ENCODE measurements at regions of chr6 and their contacts with region 1.

Region 1: GRCh38 chr6:152124429-152125074 is 317.1 kb downstream of the ESR1 start:
- DNase-seq: peak in 2 of 9 experiments; percentile 27 to 47
- ATAC-seq: no peak
- H3K4me3 ChIP-seq: no peak overlapping the region
- H3K4me3 Mint-ChIP-seq: no peak overlapping the region
- H3K27ac ChIP-seq: no peak overlapping the region
- H3K27ac Mint-ChIP-seq: peak overlapping the region; percentile 37
- H3K4me1 ChIP-seq: no peaks in the 10 kb centered on the region
- H3K4me1 Mint-ChIP-seq: no peaks in the 10 kb centered on the region
- H3K27me3 ChIP-seq: no peaks in the 10 kb centered on the region
- H3K27me3 Mint-ChIP-seq: no peaks in the 10 kb centered on the region
- CTCF ChIP-seq: peak; percentile 47

Region 2: DNA sequence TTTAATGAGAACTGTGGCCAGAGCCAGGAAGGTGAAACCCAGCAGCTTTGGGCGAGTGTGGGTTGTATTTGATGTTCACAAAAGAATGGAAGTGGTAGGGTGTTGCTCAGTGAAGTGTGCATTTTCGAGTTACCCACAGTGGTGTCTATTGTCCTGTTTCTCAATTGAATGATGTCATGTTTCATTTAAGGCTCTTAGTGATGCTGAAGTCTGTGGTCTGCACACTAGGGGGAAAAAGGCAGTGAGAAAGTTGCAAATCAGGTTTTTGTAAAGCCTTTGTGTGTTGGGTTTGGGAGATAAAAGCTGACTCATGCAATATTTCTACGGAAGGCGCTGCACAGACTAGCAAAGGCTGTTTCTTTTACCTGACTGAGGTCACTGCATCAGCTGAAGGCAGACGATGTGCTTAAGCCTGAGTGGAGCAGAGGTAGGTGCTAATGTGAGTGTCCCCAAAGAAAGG is 1403.7 kb before region 1 on chr6:
- CTCF ChIA-PET with region 1: no interaction called
- POLR2A ChIA-PET with region 1: no interaction called
- intact Hi-C with region 1: no loop called
- DNase-seq: peak in 1 of 9 experiments; percentile 15
- ATAC-seq: peak; percentile 51
- H3K4me3 ChIP-seq: no peak overlapping the region
- H3K4me3 Mint-ChIP-seq: no peak overlapping the region
- H3K27ac ChIP-seq: no peak overlapping the region
- H3K27ac Mint-ChIP-seq: no peak overlapping the region
- H3K4me1 ChIP-seq: no peaks in the 10 kb centered on the region
- H3K4me1 Mint-ChIP-seq: peaks cover 5% of the 10 kb centered on the region
- H3K27me3 ChIP-seq: no peaks in the 10 kb centered on the region
- H3K27me3 Mint-ChIP-seq: no peaks in the 10 kb centered on the region
- CTCF ChIP-seq: no peak

Region 3: DNA sequence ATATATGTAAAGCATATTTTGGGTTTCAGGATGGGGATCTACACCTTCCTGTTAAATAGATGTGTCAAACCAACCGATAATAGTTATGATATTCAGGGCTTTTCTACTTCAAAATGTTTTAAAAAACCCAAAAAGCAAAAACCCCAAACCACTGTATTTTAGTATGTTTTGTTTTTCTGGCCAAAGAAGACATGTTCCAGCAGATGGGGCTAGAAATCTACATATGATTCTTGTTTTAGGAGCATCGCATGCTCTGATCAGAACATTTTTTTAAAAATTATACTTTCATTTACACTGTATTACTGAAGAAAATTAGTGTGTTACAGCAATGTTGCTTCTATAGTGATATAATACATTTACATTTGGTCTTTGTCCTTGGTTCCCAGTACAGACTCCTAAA is 683.6 kb before region 1 on chr6:
- CTCF ChIA-PET with region 1: no interaction called
- POLR2A ChIA-PET with region 1: no interaction called
- intact Hi-C with region 1: loop called in 1 of 2 experiments (anchors 10 kb)
- DNase-seq: peak in 2 of 9 experiments; percentile 55 to 67
- ATAC-seq: peak; percentile 52
- H3K4me3 ChIP-seq: no peak overlapping the region
- H3K4me3 Mint-ChIP-seq: no peak overlapping the region
- H3K27ac ChIP-seq: peak overlapping the region in 1 of 2 experiments; percentile 23
- H3K27ac Mint-ChIP-seq: no peak overlapping the region
- H3K4me1 ChIP-seq: peaks cover 16% of the 10 kb centered on the region
- H3K4me1 Mint-ChIP-seq: peaks cover 47% of the 10 kb centered on the region
- H3K27me3 ChIP-seq: no peaks in the 10 kb centered on the region
- H3K27me3 Mint-ChIP-seq: no peaks in the 10 kb centered on the region
- CTCF ChIP-seq: peak; percentile 69

Region 4: DNA sequence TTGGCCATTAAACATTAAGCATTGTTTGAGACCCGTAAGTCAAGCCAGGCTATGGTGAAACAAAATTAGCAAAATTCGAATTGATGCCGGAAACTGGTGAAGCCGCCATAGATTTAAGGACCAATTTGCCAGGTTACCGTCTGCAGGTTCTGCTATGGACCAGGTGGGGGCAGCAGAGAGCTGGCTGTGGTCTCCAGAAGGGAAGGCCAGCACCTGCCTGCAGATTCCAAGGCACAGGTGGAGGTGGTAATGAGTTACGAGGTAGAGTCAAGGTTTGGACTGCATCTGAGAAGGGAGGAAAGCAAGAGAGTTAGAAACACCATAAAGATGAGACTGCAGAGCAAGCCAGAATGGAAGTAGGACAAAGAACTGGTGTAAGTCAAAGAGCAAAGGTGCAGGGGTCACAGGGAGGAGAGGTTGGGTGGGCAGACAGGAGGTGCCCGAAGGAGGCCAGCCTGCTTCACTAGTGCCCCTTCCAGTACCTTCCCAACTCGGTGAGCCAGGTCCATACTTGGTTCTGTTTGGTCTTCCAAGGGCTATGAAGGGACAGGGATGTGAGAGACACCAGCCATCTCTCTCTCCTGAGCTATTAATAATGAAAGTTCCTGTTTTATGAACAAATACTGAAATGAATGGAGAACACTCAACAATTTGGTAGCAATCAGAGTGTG is 448.7 kb before region 1 on chr6:
- CTCF ChIA-PET with region 1: interaction called, 4 read pairs
- POLR2A ChIA-PET with region 1: no interaction called
- intact Hi-C with region 1: loop called in 1 of 2 experiments (anchors 5 kb)
- DNase-seq: peak; percentile 2 to 68 (median 29)
- ATAC-seq: peak; percentile 75
- H3K4me3 ChIP-seq: no peak overlapping the region
- H3K4me3 Mint-ChIP-seq: no peak overlapping the region
- H3K27ac ChIP-seq: no peak overlapping the region
- H3K27ac Mint-ChIP-seq: no peak overlapping the region
- H3K4me1 ChIP-seq: no peaks in the 10 kb centered on the region
- H3K4me1 Mint-ChIP-seq: no peaks in the 10 kb centered on the region
- H3K27me3 ChIP-seq: no peaks in the 10 kb centered on the region
- H3K27me3 Mint-ChIP-seq: peaks cover 2% of the 10 kb centered on the region
- CTCF ChIP-seq: peak; percentile 80

Region 5: GRCh38 chr6:151690768-151691562 is 433.6 kb before region 1 on chr6:
- CTCF ChIA-PET with region 1: interaction called, 8 read pairs
- POLR2A ChIA-PET with region 1: no interaction called
- intact Hi-C with region 1: loop called (anchors 1 to 5 kb)
- DNase-seq: peak in 2 of 9 experiments; percentile 37 to 64
- ATAC-seq: peak; percentile 74
- H3K4me3 ChIP-seq: peak overlapping the region; percentile 0 to 41
- H3K4me3 Mint-ChIP-seq: peak overlapping the region; percentile 74
- H3K27ac ChIP-seq: peak overlapping the region in 1 of 2 experiments; percentile 38
- H3K27ac Mint-ChIP-seq: peak overlapping the region; percentile 88
- H3K4me1 ChIP-seq: no peaks in the 10 kb centered on the region
- H3K4me1 Mint-ChIP-seq: peaks cover 26% of the 10 kb centered on the region
- H3K27me3 ChIP-seq: no peaks in the 10 kb centered on the region
- H3K27me3 Mint-ChIP-seq: no peaks in the 10 kb centered on the region
- CTCF ChIP-seq: no peak

Region 6: GRCh38 chr6:151765444-151765886 is 359.1 kb before region 1 on chr6:
- CTCF ChIA-PET with region 1: interaction called, 4 read pairs
- POLR2A ChIA-PET with region 1: no interaction called
- intact Hi-C with region 1: loop called (anchors 10 kb)
- DNase-seq: peak in 5 of 9 experiments; percentile 3 to 63 (median 16)
- ATAC-seq: peak; percentile 51
- H3K4me3 ChIP-seq: no peak overlapping the region
- H3K4me3 Mint-ChIP-seq: no peak overlapping the region
- H3K27ac ChIP-seq: no peak overlapping the region
- H3K27ac Mint-ChIP-seq: no peak overlapping the region
- H3K4me1 ChIP-seq: no peaks in the 10 kb centered on the region
- H3K4me1 Mint-ChIP-seq: peaks cover 5% of the 10 kb centered on the region
- H3K27me3 ChIP-seq: no peaks in the 10 kb centered on the region
- H3K27me3 Mint-ChIP-seq: peaks cover 6% of the 10 kb centered on the region
- CTCF ChIP-seq: peak; percentile 59

Region 7: DNA sequence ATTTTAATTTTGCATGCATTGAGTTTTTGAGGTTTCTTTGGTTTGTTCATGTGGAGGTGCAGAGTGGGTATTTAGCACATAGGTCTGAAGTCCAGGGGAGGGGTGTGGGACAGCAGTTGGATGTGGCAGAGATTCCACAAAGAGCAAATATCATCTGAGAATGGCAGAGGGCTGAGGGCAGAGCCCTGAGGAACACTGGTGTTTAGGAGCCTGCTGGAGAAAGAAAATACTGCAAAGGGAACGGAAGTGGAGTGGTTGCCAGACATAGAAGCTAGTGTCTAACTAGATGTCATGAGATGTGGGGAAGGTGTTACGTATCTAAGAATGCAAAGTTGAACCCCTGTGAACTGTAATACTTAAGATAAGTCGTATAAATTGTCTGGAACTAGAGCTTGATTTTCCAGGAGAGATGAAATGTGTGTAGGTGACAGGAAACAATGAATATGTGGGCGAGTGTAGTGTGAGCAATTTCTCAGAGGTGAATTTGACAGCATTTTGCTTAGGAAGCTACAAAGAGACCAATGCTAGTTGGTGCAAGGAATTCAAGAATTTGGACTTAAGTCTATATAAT is 289.2 kb before region 1 on chr6:
- CTCF ChIA-PET with region 1: no interaction called
- POLR2A ChIA-PET with region 1: no interaction called
- intact Hi-C with region 1: no loop called
- DNase-seq: no peak
- ATAC-seq: no peak
- H3K4me3 ChIP-seq: no peak overlapping the region
- H3K4me3 Mint-ChIP-seq: no peak overlapping the region
- H3K27ac ChIP-seq: no peak overlapping the region
- H3K27ac Mint-ChIP-seq: no peak overlapping the region
- H3K4me1 ChIP-seq: no peaks in the 10 kb centered on the region
- H3K4me1 Mint-ChIP-seq: no peaks in the 10 kb centered on the region
- H3K27me3 ChIP-seq: no peaks in the 10 kb centered on the region
- H3K27me3 Mint-ChIP-seq: no peaks in the 10 kb centered on the region
- CTCF ChIP-seq: no peak

Measured in CD8-positive, alpha-beta T cell (primary cell).